ENCODE measurements at regions of chr3 and their contacts with region 1.

Region 1: GRCh38 chr3:196609343-196609775 is 30.1 kb upstream of the NRROS start:
- DNase-seq: peak; percentile 97
- H3K4me3 Mint-ChIP-seq: peak overlapping the region; percentile 62
- H3K27ac Mint-ChIP-seq: peak overlapping the region; percentile 66
- H3K4me1 Mint-ChIP-seq: peaks cover 35% of the 10 kb centered on the region
- H3K27me3 Mint-ChIP-seq: no peaks in the 10 kb centered on the region

Region 2: DNA sequence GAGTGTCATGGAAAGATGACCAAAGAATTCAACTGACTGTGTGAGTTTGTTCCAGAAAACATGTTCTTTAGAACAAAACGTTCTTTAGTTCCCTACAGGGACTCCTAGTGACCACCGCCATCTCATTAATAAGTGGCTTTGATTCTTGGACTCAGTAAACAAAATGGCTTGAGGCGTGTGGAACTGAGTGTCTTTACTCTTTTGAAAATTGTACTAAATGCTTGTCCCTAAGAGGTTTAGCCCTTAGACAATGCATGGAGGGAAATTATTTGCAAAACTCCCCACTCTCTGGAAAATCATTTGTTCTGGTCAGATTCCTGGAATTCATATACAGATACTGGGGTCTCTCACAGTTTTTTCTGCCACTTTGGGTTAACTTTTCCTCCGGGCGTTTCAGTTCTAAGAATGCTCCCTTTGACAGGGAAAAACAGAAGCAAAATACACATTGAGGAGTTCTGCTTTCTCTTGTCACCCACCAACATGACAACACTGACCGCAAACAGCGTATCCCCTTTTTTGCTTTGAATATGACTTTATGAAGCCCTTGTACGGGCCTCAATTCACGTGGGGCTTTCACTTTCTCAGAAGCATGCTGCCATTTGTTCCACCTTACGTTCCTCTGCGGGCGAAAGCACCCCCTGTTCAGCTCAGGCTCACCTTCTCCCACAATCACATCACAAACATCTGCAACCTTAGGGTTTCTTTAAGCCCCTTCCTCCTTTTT is 14.9 kb after region 1 on chr3:
- intact Hi-C with region 1: loop called (anchors 1 kb)
- DNase-seq: peak; percentile 82
- H3K4me3 Mint-ChIP-seq: peak overlapping the region; percentile 68
- H3K27ac Mint-ChIP-seq: peak overlapping the region; percentile 68
- H3K4me1 Mint-ChIP-seq: peaks cover 27% of the 10 kb centered on the region
- H3K27me3 Mint-ChIP-seq: no peaks in the 10 kb centered on the region

Region 3: GRCh38 chr3:196639483-196640296 is 30.3 kb after region 1 on chr3 and contains the start of gene NRROS:
- intact Hi-C with region 1: loop called (anchors 2 kb)
- DNase-seq: peak; percentile 89
- H3K4me3 Mint-ChIP-seq: peak within 1 kb of the TSS; percentile 86
- H3K27ac Mint-ChIP-seq: peak within 1 kb of the TSS; percentile 94
- H3K4me1 Mint-ChIP-seq: peaks cover 53% of the 10 kb centered on the region
- H3K27me3 Mint-ChIP-seq: no peaks in the 10 kb centered on the region
- total RNA-seq, gene NRROS: 38.2 and 39.0 TPM in 2 replicates

Region 4: DNA sequence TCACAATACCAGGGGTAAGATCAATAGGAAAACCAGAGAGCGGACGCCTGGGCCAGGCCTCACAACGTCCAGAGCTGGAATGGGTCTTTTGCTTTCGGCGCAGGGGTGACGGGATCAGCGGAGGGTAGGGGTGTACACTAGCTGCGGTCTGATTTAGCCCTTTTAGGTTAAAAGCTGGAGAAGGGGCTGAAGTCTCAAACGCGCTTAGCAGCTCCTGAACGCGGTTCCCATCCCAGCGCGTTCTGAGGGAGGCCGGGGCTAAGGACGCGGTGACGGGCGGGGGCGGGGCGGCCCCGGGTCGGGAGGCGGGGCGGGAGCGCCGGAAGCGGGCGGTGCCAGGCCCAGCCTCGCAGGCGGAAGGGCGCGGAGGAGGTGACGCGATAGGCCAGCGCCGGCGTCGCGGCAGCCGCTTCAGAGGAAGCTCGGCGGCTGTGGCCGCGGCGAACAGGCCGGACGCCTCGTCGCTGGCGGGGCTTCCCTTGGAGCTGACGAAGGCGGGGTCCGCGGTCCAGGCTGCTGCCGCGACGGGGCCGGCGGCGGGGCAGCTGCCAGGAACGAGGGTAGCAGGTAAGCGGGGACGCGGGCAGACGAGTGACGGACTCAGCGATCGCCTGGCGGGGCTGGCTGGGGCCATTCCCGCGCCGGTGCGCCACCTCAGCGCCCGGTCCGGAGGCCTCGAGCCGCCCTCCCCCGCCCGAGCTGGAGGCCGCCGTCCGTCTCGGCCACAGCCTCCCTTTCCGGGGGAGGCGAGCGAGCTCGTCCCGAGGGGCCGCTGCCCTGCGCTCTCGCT is 258.3 kb after region 1 on chr3 and contains the start of gene SENP5:
- intact Hi-C with region 1: loop called (anchors 1 kb)
- DNase-seq: peak; percentile 97
- H3K4me3 Mint-ChIP-seq: peak within 1 kb of the TSS; percentile 96
- H3K27ac Mint-ChIP-seq: peak within 1 kb of the TSS; percentile 93
- H3K4me1 Mint-ChIP-seq: peaks cover 17% of the 10 kb centered on the region
- H3K27me3 Mint-ChIP-seq: no peaks in the 10 kb centered on the region
- total RNA-seq, gene SENP5: 44.2 and 47.2 TPM in 2 replicates

Region 5: DNA sequence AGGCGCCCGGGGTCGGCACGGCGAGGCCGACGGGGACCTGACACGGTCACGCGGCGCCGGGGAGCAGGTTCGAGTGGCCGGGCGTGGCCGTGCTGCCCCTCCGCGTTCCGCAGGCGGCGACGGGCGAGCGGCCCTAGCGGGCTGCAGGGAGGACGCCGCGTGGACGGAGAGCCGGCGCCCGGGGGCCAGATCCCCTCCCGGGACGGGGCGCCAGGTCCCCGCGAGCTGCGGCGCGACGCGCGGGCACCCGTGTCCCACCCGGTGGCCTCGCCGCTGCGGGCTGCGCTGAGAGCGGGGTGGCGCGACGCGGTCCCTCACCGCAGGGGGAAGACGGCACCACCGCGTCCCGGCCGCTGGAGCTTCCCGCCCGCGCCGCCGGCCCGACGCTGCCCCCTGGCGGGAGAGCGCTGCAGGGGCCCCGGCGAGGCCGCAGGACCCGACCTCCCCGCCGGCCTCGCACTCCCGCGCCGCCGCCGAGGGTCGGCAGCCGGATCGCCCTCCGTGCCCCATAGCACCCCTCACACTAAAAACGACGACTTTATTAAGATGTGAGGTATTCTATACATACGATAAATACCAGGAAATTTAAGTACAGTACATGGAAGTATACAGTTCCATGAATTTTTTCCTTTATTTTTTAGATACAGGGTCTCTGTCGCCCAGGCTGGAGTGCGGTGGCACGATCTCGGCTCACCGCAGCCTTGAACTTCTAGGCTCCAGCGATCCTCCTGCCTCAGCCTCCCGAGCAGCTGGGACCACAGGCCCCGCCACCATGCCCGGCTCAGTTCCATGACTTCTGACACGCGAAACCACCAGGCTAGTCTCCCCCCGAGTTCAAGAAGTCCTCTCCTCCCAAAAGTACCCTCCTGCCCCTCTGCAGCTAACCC is 360.5 kb after region 1 on chr3:
- intact Hi-C with region 1: loop called (anchors 1 kb)
- DNase-seq: peak; percentile 94
- H3K4me3 Mint-ChIP-seq: peak overlapping the region; percentile 71
- H3K27ac Mint-ChIP-seq: peak overlapping the region; percentile 75
- H3K4me1 Mint-ChIP-seq: peaks cover 17% of the 10 kb centered on the region
- H3K27me3 Mint-ChIP-seq: peaks cover 10% of the 10 kb centered on the region

Region 6: DNA sequence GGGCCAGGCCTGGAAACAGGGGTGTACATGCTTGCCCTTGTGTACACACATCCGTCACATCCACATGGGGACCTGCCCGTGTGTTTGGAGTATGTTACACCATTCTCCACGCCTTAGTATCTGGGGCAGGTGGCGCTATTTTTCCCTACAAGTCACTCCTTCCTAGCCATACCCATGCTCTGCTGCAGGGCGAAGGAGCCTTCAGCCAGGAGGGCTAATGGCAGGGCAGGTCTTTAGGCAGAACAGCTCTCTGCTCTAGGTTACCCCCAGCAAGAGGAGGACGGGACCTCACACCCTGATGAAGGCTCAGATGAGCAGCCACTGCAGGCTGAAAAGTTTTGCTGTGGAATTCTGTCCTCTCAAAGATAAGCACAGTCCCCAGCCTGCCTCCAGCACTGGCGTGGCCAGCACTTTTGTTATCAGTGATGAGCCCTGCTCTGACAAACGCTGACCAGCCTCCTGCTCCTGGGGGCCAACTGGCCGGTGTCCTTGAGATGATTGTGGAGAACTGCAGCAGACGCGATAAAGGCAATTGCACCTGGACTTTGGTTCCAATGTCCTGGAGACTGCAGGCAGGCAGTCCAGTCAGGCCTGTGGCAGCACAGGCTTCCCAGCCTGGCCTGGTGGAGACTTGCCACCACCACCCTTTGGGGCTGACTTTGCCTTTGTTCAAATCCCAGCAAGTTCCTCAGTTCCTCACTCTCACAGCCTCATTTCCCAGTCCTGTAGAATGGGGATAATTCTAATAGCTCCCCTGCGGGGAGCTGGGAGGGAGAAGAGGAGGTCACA is 379.1 kb after region 1 on chr3:
- intact Hi-C with region 1: no loop called
- DNase-seq: no peak
- H3K4me3 Mint-ChIP-seq: no peak overlapping the region
- H3K27ac Mint-ChIP-seq: no peak overlapping the region
- H3K4me1 Mint-ChIP-seq: no peaks in the 10 kb centered on the region
- H3K27me3 Mint-ChIP-seq: peaks cover 4% of the 10 kb centered on the region

Measured in activated CD4-positive, alpha-beta T cell treated with anti-CD3 and anti-CD28 coated beads, Interleukin-2, amount 10 ng/mL, durations not matched to agents 24 days and 14 days (primary cell).